ENCODE measurements at regions of chr11 and their contacts with region 1.

Region 1: GRCh38 chr11:6531267-6531752 is 34.2 kb downstream of the DNHD1 start:
- DNase-seq: no peak
- ATAC-seq: peak; percentile 71 to 88
- H3K4me3 ChIP-seq: no peak overlapping the region
- H3K27ac ChIP-seq: no peak overlapping the region
- H3K4me1 ChIP-seq: no peaks in the 10 kb centered on the region
- H3K27me3 ChIP-seq: no peaks in the 10 kb centered on the region
- CTCF ChIP-seq: peak; percentile 71 to 84 (median 78)
- POLR2A ChIP-seq: no peak

Region 2: DNA sequence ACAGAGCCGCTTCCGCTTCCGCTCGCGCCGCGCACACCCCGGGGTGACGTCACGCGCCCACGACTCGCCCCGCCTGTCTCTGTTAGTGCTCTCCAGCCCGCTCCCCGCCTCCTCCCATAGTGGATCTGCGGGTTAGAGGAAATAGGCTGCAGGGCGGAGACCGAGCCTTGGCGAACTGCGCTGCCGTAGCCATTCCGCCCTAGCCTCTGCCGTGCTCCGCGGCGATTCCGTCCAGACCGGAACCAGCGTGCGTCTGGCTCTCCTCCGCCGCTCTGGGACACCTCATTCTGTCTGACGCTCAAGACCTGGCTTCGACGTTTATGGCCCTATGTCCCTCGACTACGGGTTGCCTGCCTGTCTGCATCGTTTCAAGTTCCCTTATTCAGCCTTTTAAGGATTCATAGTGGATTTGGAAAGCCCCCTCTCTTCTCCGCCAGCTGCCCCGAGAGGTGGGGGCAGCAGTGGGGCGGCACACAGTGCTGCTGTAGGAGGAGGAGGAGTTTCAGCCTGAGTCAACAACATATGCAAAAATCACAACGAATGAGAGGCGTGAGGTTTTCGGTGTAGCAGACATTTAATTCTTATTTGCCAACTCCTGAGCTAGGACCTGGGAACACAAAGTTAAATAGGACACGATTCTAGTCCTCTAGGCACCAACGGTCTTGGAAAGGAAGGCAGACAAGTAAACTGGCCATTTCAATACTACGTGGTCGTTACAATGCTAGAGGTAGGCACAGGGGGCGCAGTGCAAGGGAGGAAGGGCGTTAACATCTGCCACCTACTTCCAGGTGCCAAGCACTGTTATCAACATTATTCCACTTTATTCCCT is 81.1 kb after region 1 on chr11 and contains the start of gene TAF10:
- in situ Hi-C with region 1: no loop called
- intact Hi-C with region 1: loop called (anchors 5 kb)
- DNase-seq: peak; percentile 95 to 96
- ATAC-seq: peak; percentile 91 to 94
- H3K4me3 ChIP-seq: peak within 1 kb of the TSS; percentile 72 to 85 (median 78)
- H3K27ac ChIP-seq: peak within 1 kb of the TSS; percentile 92 to 100 (median 99)
- H3K4me1 ChIP-seq: peaks cover 18 to 20% of the 10 kb centered on the region in 2 donors
- H3K27me3 ChIP-seq: no peaks in the 10 kb centered on the region
- CTCF ChIP-seq: peak in 4 of 5 experiments; percentile 15 to 62 (median 37)
- POLR2A ChIP-seq: peak; percentile 92 to 94
- total RNA-seq, gene TAF10: 49.8 to 77.8 (median 65.7) TPM

Region 3: GRCh38 chr11:6674862-6675261 is 143.6 kb after region 1 on chr11:
- in situ Hi-C with region 1: loop called (anchors 5 to 10 kb)
- intact Hi-C with region 1: no loop called
- DNase-seq: no peak
- ATAC-seq: no peak
- H3K4me3 ChIP-seq: no peak overlapping the region
- H3K27ac ChIP-seq: peak overlapping the region in 3 of 4 donors; percentile 35 to 47 (median 36)
- H3K4me1 ChIP-seq: no peaks in the 10 kb centered on the region
- H3K27me3 ChIP-seq: no peaks in the 10 kb centered on the region
- CTCF ChIP-seq: no peak
- POLR2A ChIP-seq: no peak

Region 4: GRCh38 chr11:6682936-6683861 is 151.9 kb after region 1 on chr11 and contains the start of gene MRPL17:
- in situ Hi-C with region 1: loop called (anchors 5 to 10 kb)
- intact Hi-C with region 1: loop called (anchors 1 kb)
- DNase-seq: peak; percentile 98 to 99
- ATAC-seq: peak; percentile 99
- H3K4me3 ChIP-seq: peak within 1 kb of the TSS; percentile 81 to 98 (median 92)
- H3K27ac ChIP-seq: peak within 1 kb of the TSS; percentile 82 to 95 (median 87)
- H3K4me1 ChIP-seq: peaks cover 9 to 22% of the 10 kb centered on the region in 2 donors
- H3K27me3 ChIP-seq: no peaks in the 10 kb centered on the region
- CTCF ChIP-seq: peak; percentile 77 to 94 (median 92)
- POLR2A ChIP-seq: peak; percentile 75 to 78
- total RNA-seq, gene MRPL17: 25.1 to 33.4 (median 27.7) TPM

Region 5: DNA sequence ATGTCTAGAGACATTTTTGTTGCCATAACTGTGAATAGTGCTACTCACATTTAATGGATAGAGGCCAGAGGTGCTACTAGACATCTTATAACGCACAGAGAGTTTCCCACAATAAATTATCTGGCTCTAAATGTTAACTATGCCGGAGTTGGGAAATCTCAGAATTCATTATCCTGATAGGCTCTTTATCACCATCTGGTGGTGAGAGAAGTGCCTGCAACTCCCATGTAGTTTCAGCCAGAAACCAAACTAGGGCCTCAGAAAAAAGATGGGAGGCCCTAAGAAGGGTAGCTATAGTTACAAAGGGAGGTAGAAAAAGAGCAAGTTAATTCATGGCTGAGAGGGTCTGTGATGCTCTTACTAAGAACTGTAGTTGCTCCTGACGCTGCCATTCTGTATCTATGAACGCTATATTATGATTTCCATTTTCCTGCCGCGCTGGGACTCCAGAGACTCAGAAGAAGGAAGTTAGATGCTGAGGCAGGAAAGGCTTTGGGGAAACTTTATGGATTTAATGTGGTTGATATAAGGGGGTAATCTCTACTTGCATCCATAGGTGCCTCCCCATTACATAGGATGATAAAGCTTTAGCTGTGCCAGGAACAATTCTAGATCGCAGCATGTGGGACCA is 174.7 kb after region 1 on chr11:
- in situ Hi-C with region 1: loop called in 1 of 4 experiments (anchors 5 kb)
- intact Hi-C with region 1: loop called (anchors 1 kb)
- DNase-seq: peak in 1 of 2 donors; percentile 17
- ATAC-seq: peak; percentile 25 to 80
- H3K4me3 ChIP-seq: no peak overlapping the region
- H3K27ac ChIP-seq: peak overlapping the region in 2 of 4 donors; percentile 7 to 34
- H3K4me1 ChIP-seq: peaks cover 0 to 4% of the 10 kb centered on the region in 2 donors
- H3K27me3 ChIP-seq: no peaks in the 10 kb centered on the region
- CTCF ChIP-seq: peak; percentile 77 to 91 (median 79)
- POLR2A ChIP-seq: no peak

Region 6: DNA sequence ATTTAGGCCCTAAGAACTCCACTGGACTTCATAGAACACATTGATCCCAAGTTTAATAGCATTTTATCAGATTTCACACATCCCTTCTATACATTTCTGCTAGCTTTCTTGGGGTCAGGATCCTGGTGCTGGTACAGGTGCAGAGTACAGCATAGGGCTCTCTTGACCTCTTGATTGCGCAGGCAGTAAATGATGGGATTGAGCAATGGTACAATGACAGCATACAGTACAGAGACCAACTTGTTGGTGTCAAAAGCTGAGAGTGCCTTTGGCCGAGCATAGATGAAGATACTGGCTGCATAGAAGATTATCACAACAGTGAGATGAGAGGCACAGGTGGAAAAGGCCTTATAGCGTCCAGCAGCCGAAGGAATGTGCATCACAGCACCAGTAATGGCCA is 263.3 kb after region 1 on chr11:
- in situ Hi-C with region 1: no loop called
- intact Hi-C with region 1: no loop called
- DNase-seq: no peak
- ATAC-seq: no peak
- H3K4me3 ChIP-seq: no peak overlapping the region
- H3K27ac ChIP-seq: no peak overlapping the region
- H3K4me1 ChIP-seq: no peaks in the 10 kb centered on the region
- H3K27me3 ChIP-seq: no peaks in the 10 kb centered on the region
- CTCF ChIP-seq: no peak
- POLR2A ChIP-seq: no peak

Measured in gastrocnemius medialis (tissue), 4 donors.